ENCODE measurements at regions of chr16 and their contacts with region 1.

Region 1: DNA sequence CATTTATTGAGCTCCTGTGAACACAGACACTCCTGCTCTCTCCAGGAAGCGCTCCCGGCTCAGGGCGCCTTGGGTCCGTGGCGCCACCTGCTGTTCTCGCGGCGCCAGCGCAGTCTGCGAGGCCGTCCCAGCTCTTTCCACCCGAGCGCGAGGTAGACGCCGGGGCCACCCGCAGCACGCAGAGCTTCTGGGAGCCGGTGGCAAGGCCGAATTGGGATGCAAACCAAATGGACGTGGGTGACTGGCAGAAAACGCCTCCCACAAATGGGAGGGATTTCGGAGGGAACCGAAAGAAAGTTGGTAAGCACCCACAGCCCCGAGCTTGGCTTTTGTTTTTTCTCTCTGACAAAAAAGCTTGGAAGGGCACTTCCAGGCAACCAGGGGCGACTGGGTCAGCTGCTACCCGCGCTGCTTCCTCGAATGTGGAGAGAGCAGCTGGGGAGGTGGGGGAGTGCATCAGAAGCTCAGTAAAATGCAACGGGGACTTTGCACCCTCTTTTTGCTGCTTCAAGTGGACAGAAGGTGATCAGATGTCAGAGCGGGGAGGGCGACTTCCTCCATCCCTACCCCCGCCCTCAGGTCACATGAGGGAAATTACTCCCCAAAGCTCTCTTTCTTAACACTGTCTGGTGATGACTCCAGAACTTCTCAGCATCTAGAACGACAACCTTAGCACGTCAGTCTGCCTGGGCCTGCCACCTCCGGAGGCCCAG is 13.5 kb upstream of the N4BP1 start:
- DNase-seq: peak; percentile 82
- ATAC-seq: peak; percentile 95
- H3K4me3 Mint-ChIP-seq: peak overlapping the region; percentile 69
- H3K27ac Mint-ChIP-seq: peak overlapping the region; percentile 66
- H3K4me1 Mint-ChIP-seq: peaks cover 28% of the 10 kb centered on the region
- H3K27me3 Mint-ChIP-seq: no peaks in the 10 kb centered on the region
- CTCF ChIP-seq: peak; percentile 95

Region 2: GRCh38 chr16:48231727-48232492 is 391.6 kb before region 1 on chr16:
- CTCF ChIA-PET with region 1: interaction called, 9 read pairs
- POLR2A ChIA-PET with region 1: no interaction called
- intact Hi-C with region 1: loop called (anchors 10 kb)
- DNase-seq: peak; percentile 73
- ATAC-seq: peak; percentile 81
- H3K4me3 Mint-ChIP-seq: peak overlapping the region; percentile 34
- H3K27ac Mint-ChIP-seq: peak overlapping the region; percentile 78
- H3K4me1 Mint-ChIP-seq: peaks cover 23% of the 10 kb centered on the region
- H3K27me3 Mint-ChIP-seq: peaks cover 3% of the 10 kb centered on the region
- CTCF ChIP-seq: peak; percentile 53

Region 3: GRCh38 chr16:48365581-48366164 is 257.8 kb before region 1 on chr16:
- CTCF ChIA-PET with region 1: interaction called, 30 read pairs
- POLR2A ChIA-PET with region 1: interaction called, 8 read pairs
- intact Hi-C with region 1: no loop called
- DNase-seq: peak; percentile 88
- ATAC-seq: peak; percentile 97
- H3K4me3 Mint-ChIP-seq: peak overlapping the region; percentile 98
- H3K27ac Mint-ChIP-seq: peak overlapping the region; percentile 99
- H3K4me1 Mint-ChIP-seq: peaks cover 52% of the 10 kb centered on the region
- H3K27me3 Mint-ChIP-seq: no peaks in the 10 kb centered on the region
- CTCF ChIP-seq: no peak

Region 4: DNA sequence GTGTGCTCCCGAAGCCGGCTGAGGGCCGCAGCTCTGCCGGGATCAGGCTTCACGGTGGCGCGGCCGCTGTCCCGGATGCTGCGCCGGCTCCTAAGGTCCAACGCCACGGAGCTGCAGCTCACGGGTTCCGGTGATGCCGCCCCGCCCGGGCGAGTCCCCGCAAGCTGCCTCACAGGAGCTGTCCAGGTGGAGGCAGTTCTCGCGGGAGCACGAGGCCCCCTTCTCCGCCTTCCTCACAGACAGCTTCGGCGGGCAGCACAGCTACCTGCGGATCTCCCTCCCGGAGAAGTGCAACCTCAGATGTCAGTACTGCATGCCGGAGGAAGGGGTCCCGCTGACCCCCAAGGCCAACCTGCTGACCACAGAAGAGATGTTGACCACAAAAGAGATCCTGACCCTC is 126.8 kb before region 1 on chr16:
- CTCF ChIA-PET with region 1: interaction called, 10 read pairs
- POLR2A ChIA-PET with region 1: no interaction called
- intact Hi-C with region 1: no loop called
- DNase-seq: no peak
- ATAC-seq: no peak
- H3K4me3 Mint-ChIP-seq: no peak overlapping the region
- H3K27ac Mint-ChIP-seq: no peak overlapping the region
- H3K4me1 Mint-ChIP-seq: no peaks in the 10 kb centered on the region
- H3K27me3 Mint-ChIP-seq: no peaks in the 10 kb centered on the region
- CTCF ChIP-seq: no peak

Region 5: GRCh38 chr16:48542020-48542473 is 81.4 kb before region 1 on chr16:
- CTCF ChIA-PET with region 1: interaction called, 68 read pairs
- POLR2A ChIA-PET with region 1: interaction called, 3 read pairs
- intact Hi-C with region 1: no loop called
- DNase-seq: peak; percentile 52
- ATAC-seq: peak; percentile 47
- H3K4me3 Mint-ChIP-seq: no peak overlapping the region
- H3K27ac Mint-ChIP-seq: no peak overlapping the region
- H3K4me1 Mint-ChIP-seq: peaks cover 16% of the 10 kb centered on the region
- H3K27me3 Mint-ChIP-seq: no peaks in the 10 kb centered on the region
- CTCF ChIP-seq: peak; percentile 17

Region 6: GRCh38 chr16:48561960-48562393 is 61.5 kb before region 1 on chr16:
- CTCF ChIA-PET with region 1: interaction called, 32 read pairs
- POLR2A ChIA-PET with region 1: interaction called, 4 read pairs
- intact Hi-C with region 1: no loop called
- DNase-seq: no peak
- ATAC-seq: no peak
- H3K4me3 Mint-ChIP-seq: no peak overlapping the region
- H3K27ac Mint-ChIP-seq: peak overlapping the region; percentile 37
- H3K4me1 Mint-ChIP-seq: peaks cover 78% of the 10 kb centered on the region
- H3K27me3 Mint-ChIP-seq: no peaks in the 10 kb centered on the region
- CTCF ChIP-seq: no peak

Region 7: GRCh38 chr16:48790151-48790550 is 166.7 kb after region 1 on chr16:
- CTCF ChIA-PET with region 1: no interaction called
- POLR2A ChIA-PET with region 1: no interaction called
- intact Hi-C with region 1: no loop called
- DNase-seq: no peak
- ATAC-seq: no peak
- H3K4me3 Mint-ChIP-seq: no peak overlapping the region
- H3K27ac Mint-ChIP-seq: no peak overlapping the region
- H3K4me1 Mint-ChIP-seq: no peaks in the 10 kb centered on the region
- H3K27me3 Mint-ChIP-seq: peaks cover 1% of the 10 kb centered on the region
- CTCF ChIP-seq: no peak

Region 8: DNA sequence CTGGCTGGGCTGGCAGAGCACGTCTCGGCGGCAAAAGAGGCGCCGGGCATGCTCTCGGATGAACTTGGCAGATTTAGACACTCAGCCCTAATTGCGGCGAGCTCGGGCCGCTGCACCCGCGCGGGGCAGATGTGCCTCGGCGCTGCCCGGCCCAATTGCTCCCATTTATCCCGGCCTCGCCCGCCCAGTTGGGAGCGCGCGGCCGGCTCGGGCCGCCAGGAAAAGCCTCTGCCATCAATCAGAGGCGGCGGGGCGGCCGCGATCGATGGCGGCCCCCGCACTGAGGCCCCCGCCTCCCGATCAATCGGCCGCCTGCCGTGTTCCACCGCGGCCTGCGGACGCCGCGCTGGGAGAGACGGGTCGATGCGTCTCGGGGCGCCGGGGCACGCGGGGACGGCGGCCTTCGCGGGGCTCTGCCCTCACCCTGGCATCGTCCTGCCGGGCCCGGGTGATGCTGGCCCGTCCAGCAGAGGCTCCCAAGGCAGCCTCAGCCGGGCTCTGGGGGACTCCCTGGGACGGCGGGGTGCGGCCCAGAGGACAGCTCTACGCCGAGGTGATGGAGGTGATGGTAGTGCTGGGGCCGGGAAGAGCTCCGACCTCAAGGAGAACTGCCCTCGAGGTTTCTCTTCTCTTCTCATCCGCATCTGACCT is 187.5 kb after region 1 on chr16:
- CTCF ChIA-PET with region 1: no interaction called
- POLR2A ChIA-PET with region 1: no interaction called
- intact Hi-C with region 1: no loop called
- DNase-seq: no peak
- ATAC-seq: no peak
- H3K4me3 Mint-ChIP-seq: no peak overlapping the region
- H3K27ac Mint-ChIP-seq: no peak overlapping the region
- H3K4me1 Mint-ChIP-seq: no peaks in the 10 kb centered on the region
- H3K27me3 Mint-ChIP-seq: peaks cover 23% of the 10 kb centered on the region
- CTCF ChIP-seq: no peak